B cell (primary cell): ENCODE measurements at regions of chr17 and their contacts with region 1.

Region 1: DNA sequence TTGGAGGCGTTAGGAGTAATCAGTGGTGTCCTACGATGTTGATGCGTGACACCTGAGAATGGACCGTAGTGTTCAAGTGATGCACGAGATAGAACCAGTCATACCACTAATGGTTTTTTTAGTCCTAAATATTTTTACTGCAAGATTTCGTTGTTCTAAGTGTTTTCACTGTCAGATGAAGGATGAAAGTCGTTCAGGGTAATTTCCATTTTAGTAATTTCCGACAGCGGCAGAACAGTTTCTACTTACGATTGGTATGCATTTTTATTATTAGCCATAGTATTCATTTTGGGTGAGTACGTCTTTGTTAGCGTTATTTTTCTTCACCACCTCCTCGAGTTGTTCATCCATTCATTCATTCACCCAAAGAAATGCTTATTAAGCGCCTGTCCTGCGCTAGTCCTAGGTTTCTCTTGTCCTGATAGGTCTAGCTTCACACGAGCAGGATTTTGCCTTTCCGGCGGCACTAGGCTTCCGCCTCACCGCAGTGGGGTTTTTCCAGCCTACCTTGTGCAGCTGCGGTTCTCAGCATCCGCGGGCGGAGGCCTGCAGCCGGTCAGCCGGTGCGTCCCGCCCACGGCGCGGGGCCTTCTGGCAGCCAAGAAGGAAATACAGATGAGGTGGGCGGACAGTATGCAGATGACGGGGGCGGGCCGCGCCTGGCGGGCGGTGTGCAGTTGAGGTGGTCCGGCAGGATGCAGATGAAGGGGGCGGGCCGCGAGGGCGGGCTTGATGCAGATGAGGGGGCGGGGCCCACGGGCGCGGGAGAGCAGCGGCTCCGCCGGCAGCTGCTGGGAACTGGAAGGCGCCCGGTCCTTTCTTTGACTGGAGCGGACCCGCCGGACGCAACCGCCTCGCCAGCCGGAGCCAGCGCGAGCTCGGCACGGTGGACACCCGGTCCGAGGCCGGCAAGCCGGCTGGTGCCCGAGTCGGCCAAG is 146.4 kb downstream of the SPECC1 start:
- DNase-seq: peak; percentile 99
- ATAC-seq: peak; percentile 96
- H3K4me3 ChIP-seq: peak overlapping the region; percentile 8 to 77 (median 72)
- H3K4me3 Mint-ChIP-seq: no peak overlapping the region
- H3K27ac ChIP-seq: peak overlapping the region; percentile 56 to 85
- H3K27ac Mint-ChIP-seq: no peak overlapping the region
- H3K4me1 ChIP-seq: peaks cover 27 to 35% of the 10 kb centered on the region in 2 donors
- H3K4me1 Mint-ChIP-seq: peaks cover 4% of the 10 kb centered on the region
- H3K27me3 ChIP-seq: no peaks in the 10 kb centered on the region
- H3K27me3 Mint-ChIP-seq: no peaks in the 10 kb centered on the region
- CTCF ChIP-seq: no peak

Region 2: GRCh38 chr17:20009302-20010098 is 146.0 kb before region 1 on chr17 and contains the start of gene SPECC1:
- CTCF ChIA-PET with region 1: interaction called, 3 read pairs
- POLR2A ChIA-PET with region 1: no interaction called
- intact Hi-C with region 1: loop called (anchors 1 kb)
- DNase-seq: peak; percentile 90
- ATAC-seq: peak; percentile 98
- H3K4me3 ChIP-seq: peak within 1 kb of the TSS; percentile 64 to 74 (median 68)
- H3K4me3 Mint-ChIP-seq: peak within 1 kb of the TSS; percentile 94
- H3K27ac ChIP-seq: no peak within 1 kb of the TSS
- H3K27ac Mint-ChIP-seq: peak within 1 kb of the TSS; percentile 63
- H3K4me1 ChIP-seq: peaks cover 10 to 13% of the 10 kb centered on the region in 2 donors
- H3K4me1 Mint-ChIP-seq: peaks cover 11% of the 10 kb centered on the region
- H3K27me3 ChIP-seq: peaks cover 0 to 23% (median 16%) of the 10 kb centered on the region in 4 experiments
- H3K27me3 Mint-ChIP-seq: peaks cover 53% of the 10 kb centered on the region
- CTCF ChIP-seq: peak; percentile 99
- total RNA-seq, gene SPECC1: 6.1 and 7.4 TPM in 2 replicates